Breast epithelium (tissue), 4 donors: ENCODE measurements at regions of chr22 and their contacts with region 1.

Region 1: GRCh38 chr22:23565942-23566704 is 14.0 kb downstream of the IGLL1 start:
- DNase-seq: no peak
- H3K4me3 ChIP-seq: peak overlapping the region; percentile 38 to 76 (median 54)
- H3K27ac ChIP-seq: no peak overlapping the region
- H3K4me1 ChIP-seq: peaks cover 0 to 7% of the 10 kb centered on the region in 2 donors
- H3K27me3 ChIP-seq: peaks cover 0 to 8% of the 10 kb centered on the region in 2 donors
- CTCF ChIP-seq: no peak
- POLR2A ChIP-seq: no peak

Region 2: DNA sequence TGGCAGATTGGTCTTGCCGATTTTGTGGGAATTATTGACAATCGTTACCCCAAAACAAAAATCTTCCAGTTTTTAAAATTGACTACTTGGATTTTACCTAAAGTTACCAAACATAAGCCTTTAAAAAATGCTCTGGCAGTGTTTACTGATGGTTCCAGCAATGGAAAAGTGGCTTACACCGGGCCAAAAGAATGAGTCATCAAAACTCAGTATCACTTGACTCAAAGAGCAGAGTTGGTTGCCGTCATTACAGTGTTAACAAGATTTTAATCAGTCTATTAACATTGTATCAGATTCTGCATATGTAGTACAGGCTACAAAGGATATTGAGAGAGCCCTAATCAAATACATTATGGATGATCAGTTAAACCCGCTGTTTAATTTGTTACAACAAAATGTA is 23.2 kb before region 1 on chr22:
- intact Hi-C with region 1: loop called (anchors 2 kb)
- DNase-seq: no peak
- H3K4me3 ChIP-seq: no peak overlapping the region
- H3K27ac ChIP-seq: no peak overlapping the region
- H3K4me1 ChIP-seq: no peaks in the 10 kb centered on the region
- H3K27me3 ChIP-seq: no peaks in the 10 kb centered on the region
- CTCF ChIP-seq: no peak
- POLR2A ChIP-seq: no peak